ENCODE measurements at regions of chr3 and their contacts with region 1.

Region 1: DNA sequence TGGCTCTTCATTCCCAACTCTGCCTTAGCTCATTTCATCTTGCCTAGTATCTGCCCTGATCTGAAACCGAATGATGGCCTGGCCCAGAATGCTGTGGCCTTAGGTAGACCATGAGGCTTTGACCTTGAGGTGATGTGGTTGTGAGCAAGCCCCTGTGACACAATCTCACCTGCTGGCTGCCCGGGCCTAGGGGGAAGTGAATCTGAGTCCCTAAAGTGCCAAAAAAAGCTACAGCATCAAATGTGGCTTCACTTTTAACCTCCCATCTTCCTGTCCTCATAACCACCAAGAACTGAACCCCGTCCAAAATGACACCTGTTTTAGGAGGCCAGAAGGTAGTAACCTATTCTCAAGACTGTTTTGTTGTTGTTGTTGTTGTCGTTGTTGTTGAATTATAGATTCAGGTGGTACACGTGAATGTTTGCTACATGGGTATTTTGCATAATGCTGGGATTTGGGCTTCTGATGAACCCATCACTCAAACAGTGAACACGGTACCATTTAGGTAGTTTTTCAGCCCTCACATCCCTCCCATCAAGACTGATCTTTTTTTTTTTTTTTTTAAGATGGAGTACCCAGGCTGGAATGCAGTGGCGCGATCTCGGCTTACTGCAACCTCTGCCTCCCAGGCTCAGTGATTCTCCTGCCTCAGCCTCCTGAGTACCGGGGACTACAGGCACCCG is 54.6 kb downstream of the MCCC1 start:
- DNase-seq: peak; percentile 93
- H3K4me3 ChIP-seq: peak overlapping the region; percentile 51
- H3K27ac ChIP-seq: peak overlapping the region; percentile 95
- H3K4me1 ChIP-seq: peaks cover 64% of the 10 kb centered on the region
- CTCF ChIP-seq: no peak

Region 2: DNA sequence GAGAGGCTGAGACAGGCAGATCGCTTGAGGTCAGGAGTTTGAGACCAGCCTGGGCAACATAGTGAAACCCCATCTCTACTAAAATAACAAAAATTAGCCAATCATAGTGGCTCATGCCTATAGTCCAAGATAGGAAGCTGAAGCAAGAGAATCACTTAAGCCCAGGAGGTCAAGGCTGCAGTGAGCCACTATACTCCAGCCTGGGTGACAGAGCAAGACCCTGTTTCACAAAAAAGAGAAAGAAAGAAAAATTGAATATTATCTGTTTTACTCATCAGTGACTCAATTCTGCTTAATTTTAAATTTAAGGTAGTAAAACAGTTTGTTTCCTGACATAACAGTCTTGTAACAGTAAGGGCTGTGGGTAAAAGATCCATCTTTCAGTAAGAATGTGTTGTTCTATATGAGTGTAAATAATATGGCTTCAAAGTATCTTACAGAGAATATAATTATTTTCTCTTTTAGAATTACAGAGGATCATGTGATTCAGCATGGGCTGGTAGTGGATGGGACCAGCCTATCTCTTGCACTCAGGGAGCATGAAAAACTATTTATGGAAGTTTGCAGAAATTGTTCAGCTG is 165.6 kb before region 1 on chr3:
- CTCF ChIA-PET with region 1: no interaction called
- POLR2A ChIA-PET with region 1: no interaction called
- intact Hi-C with region 1: no loop called
- DNase-seq: no peak
- H3K4me3 ChIP-seq: no peak overlapping the region
- H3K27ac ChIP-seq: no peak overlapping the region
- H3K4me1 ChIP-seq: no peaks in the 10 kb centered on the region
- CTCF ChIP-seq: no peak

Region 3: DNA sequence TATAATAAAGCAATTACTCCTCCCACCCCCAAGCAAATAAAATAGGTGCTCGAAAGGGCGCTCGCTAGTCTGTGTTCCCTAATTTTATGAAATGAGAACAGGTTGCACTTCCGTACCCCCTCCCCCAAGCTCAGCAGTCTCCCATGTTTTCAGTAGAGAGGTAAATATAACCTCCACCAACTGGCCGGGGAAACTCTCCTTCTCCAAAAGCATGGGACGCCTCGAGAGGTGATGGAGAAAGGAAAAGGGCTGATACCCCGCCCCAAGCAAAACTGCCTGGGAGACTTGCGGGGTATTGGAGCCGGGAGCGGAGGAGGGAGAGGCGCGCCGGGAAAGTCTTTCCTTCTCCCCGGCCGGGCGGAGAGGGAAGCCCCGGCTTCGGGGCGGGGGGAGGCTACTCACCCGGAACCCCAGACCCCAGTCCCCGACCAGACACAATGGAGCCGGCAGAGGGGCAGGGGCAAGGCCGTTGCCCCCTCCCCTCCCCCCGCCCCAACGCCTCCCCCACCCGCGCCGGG is 65.0 kb before region 1 on chr3:
- CTCF ChIA-PET with region 1: no interaction called
- POLR2A ChIA-PET with region 1: interaction called, 3 read pairs
- intact Hi-C with region 1: loop called (anchors 5 kb)
- DNase-seq: peak; percentile 52
- H3K4me3 ChIP-seq: peak overlapping the region; percentile 91
- H3K27ac ChIP-seq: peak overlapping the region; percentile 50
- H3K4me1 ChIP-seq: peaks cover 37% of the 10 kb centered on the region
- CTCF ChIP-seq: no peak

Region 4: DNA sequence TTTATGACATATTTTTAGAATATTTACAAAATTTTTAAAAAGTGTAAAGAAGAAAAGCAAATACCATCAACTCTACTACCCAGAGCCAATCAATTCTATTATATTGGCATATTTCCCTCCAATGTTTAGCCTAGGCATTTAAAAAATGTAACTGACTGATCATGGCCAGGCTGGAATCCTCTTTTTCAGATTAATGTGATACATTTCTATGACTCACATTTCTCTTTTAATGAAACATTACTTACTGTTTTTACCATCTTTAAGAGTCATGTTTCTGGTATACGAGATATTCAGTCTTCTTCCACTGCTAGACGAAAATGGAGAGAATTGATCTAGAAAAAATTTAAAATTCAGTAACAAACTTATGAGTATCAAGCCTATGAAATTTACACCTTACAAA is 10.9 kb before region 1 on chr3:
- CTCF ChIA-PET with region 1: no interaction called
- POLR2A ChIA-PET with region 1: interaction called, 13 read pairs
- intact Hi-C with region 1: no loop called
- DNase-seq: no peak
- H3K4me3 ChIP-seq: no peak overlapping the region
- H3K27ac ChIP-seq: no peak overlapping the region
- H3K4me1 ChIP-seq: no peaks in the 10 kb centered on the region
- CTCF ChIP-seq: no peak

Region 5: GRCh38 chr3:183099026-183099837 is 54.5 kb after region 1 on chr3 and contains the start of gene MCCC1:
- CTCF ChIA-PET with region 1: no interaction called
- POLR2A ChIA-PET with region 1: interaction called, 11 read pairs
- intact Hi-C with region 1: loop called (anchors 1 kb)
- DNase-seq: peak; percentile 99
- H3K4me3 ChIP-seq: peak within 1 kb of the TSS; percentile 82
- H3K27ac ChIP-seq: peak within 1 kb of the TSS; percentile 75
- H3K4me1 ChIP-seq: peaks cover 20% of the 10 kb centered on the region
- CTCF ChIP-seq: no peak
- total RNA-seq, gene MCCC1: 29.9 and 39.9 TPM in 2 replicates

Region 6: GRCh38 chr3:183116025-183116614 is 71.4 kb after region 1 on chr3:
- CTCF ChIA-PET with region 1: no interaction called
- POLR2A ChIA-PET with region 1: interaction called, 10 read pairs
- intact Hi-C with region 1: loop called (anchors 2 kb)
- DNase-seq: peak; percentile 99
- H3K4me3 ChIP-seq: peak overlapping the region; percentile 56
- H3K27ac ChIP-seq: peak overlapping the region; percentile 67
- H3K4me1 ChIP-seq: peaks cover 32% of the 10 kb centered on the region
- CTCF ChIP-seq: no peak

Measured in OCI-LY7 (cell line).